T-cell (primary cell): ENCODE measurements at regions of chr11 and their contacts with region 1.

Region 1: DNA sequence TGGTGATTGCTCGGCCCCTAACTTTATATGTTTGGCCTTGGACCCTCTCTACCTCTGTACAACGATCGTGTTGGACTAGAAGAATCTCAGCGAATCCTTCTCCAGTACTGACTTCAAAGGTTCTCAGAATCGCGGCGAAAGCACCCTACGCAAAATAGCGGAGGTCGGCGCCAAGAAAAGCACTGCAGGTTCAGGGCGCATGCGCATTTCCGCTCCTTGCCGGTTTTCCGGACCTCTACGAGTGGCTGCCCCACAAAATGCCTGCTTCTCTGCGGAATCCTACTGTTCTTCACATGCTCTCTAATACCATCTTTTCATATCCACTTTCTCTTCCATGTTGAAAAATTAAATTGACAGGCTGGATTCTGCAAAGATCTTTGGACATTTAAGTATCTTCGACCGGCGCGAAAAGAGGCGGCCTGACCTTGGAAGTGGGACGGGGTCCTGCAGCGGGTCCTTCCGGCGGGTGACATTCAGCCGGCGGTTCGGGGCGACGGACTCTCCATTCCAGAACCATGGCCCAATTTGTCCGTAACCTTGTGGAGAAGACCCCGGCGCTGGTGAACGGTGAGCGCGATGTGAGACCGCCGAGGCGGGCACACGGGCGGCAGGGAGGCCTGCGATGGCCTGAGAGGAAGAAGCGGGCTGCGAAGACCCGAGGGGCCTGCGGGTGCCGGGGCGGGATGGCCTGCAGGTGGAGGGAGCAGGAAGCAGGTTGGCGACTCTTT is at the start of gene ATP5MG:
- DNase-seq: peak; percentile 83 to 96 (median 91)
- ATAC-seq: peak; percentile 61 to 83 (median 81)
- H3K4me3 ChIP-seq: peak within 1 kb of the TSS; percentile 94 to 97
- H3K4me3 Mint-ChIP-seq: peak within 1 kb of the TSS; percentile 96 to 97 (median 97)
- H3K27ac ChIP-seq: peak within 1 kb of the TSS; percentile 96
- H3K27ac Mint-ChIP-seq: peak within 1 kb of the TSS; percentile 100
- H3K4me1 ChIP-seq: peaks cover 32 to 33% of the 10 kb centered on the region in 2 experiments
- H3K4me1 Mint-ChIP-seq: peaks cover 58 to 80% (median 74%) of the 10 kb centered on the region in 3 donors
- H3K27me3 ChIP-seq: no peaks in the 10 kb centered on the region
- H3K27me3 Mint-ChIP-seq: no peaks in the 10 kb centered on the region
- total RNA-seq, gene ATP5MG: 140 to 188 (median 172) TPM

Region 2: GRCh38 chr11:117002639-117003299 is 1398.5 kb before region 1 on chr11:
- CTCF ChIA-PET with region 1: no interaction called
- POLR2A ChIA-PET with region 1: interaction called in 1 of 2 experiments, 13 read pairs
- DNase-seq: peak in 2 of 35 experiments; percentile 14 to 28
- ATAC-seq: peak; percentile 37 to 70 (median 53)
- H3K4me3 ChIP-seq: no peak overlapping the region
- H3K4me3 Mint-ChIP-seq: no peak overlapping the region
- H3K27ac ChIP-seq: no peak overlapping the region
- H3K27ac Mint-ChIP-seq: peak overlapping the region; percentile 45 to 60
- H3K4me1 ChIP-seq: peaks cover 6 to 9% of the 10 kb centered on the region in 2 experiments
- H3K4me1 Mint-ChIP-seq: peaks cover 72 to 79% (median 75%) of the 10 kb centered on the region in 3 donors
- H3K27me3 ChIP-seq: no peaks in the 10 kb centered on the region
- H3K27me3 Mint-ChIP-seq: no peaks in the 10 kb centered on the region

Region 3: DNA sequence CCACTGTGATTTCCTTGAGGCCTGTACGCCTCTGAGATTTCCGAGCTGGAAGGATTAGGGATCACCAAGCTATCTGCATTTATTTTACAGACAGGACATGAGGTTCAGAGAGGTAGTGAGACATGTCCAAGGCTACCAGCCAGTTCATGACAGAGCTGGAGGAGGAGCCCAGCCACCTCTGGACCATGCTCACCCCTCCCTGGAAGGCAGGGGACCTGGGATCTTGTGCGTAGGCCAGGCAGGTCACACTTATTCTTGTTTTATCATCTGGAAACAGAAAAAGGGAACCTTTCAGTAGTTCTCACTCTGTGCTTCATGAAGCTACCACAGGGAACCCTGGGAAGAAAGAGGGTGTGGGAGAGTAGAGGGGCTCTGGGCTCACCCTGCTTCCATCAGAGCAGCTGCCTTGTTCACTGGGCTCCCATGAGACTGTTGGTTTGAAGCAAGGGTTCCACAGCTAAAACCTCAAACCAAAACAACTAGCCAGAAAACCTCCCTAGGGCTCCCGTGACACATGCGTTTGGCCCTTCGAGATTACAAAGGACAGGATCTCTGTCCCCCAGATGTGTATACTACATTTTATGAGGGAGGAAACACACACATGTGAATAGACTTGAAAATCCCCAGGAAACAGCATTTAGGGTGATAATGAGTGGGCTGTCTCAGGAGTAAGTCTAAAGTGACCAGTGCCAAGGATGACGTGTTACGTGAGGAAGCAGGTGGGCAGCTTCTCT is 710.7 kb before region 1 on chr11:
- CTCF ChIA-PET with region 1: no interaction called
- POLR2A ChIA-PET with region 1: no interaction called
- DNase-seq: no peak
- ATAC-seq: no peak
- H3K4me3 ChIP-seq: no peak overlapping the region
- H3K4me3 Mint-ChIP-seq: no peak overlapping the region
- H3K27ac ChIP-seq: no peak overlapping the region
- H3K27ac Mint-ChIP-seq: no peak overlapping the region
- H3K4me1 ChIP-seq: no peaks in the 10 kb centered on the region
- H3K4me1 Mint-ChIP-seq: no peaks in the 10 kb centered on the region
- H3K27me3 ChIP-seq: peaks cover 0 to 9% of the 10 kb centered on the region in 2 experiments
- H3K27me3 Mint-ChIP-seq: peaks cover 9 to 10% of the 10 kb centered on the region in 2 donors

Region 4: DNA sequence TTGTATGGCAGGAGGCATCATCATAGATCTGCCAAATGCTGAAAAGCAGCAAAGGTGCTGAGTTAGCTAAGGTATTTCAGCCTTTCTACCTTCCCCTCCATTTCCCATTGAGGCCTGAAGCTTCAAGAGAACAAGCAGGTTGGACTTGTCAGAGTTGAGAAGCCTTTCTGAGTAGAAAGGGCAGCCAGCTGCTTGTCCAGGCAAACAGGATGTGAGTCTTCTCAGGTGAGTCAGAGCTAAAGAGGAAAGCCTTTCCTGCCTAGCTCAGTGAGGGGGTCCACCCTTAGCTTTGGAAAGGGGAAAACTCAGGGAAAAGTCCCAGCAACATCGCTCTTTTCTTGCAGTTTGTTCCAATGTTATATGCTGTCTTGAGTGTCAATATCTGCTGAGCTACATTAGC is 124.0 kb before region 1 on chr11:
- CTCF ChIA-PET with region 1: no interaction called
- POLR2A ChIA-PET with region 1: no interaction called
- DNase-seq: no peak
- ATAC-seq: peak in 3 of 4 experiments; percentile 64 to 83 (median 70)
- H3K4me3 ChIP-seq: no peak overlapping the region
- H3K4me3 Mint-ChIP-seq: no peak overlapping the region
- H3K27ac ChIP-seq: no peak overlapping the region
- H3K27ac Mint-ChIP-seq: peak overlapping the region; percentile 51 to 54
- H3K4me1 ChIP-seq: no peaks in the 10 kb centered on the region
- H3K4me1 Mint-ChIP-seq: peaks cover 33 to 41% (median 39%) of the 10 kb centered on the region in 3 donors
- H3K27me3 ChIP-seq: no peaks in the 10 kb centered on the region
- H3K27me3 Mint-ChIP-seq: no peaks in the 10 kb centered on the region

Region 5: DNA sequence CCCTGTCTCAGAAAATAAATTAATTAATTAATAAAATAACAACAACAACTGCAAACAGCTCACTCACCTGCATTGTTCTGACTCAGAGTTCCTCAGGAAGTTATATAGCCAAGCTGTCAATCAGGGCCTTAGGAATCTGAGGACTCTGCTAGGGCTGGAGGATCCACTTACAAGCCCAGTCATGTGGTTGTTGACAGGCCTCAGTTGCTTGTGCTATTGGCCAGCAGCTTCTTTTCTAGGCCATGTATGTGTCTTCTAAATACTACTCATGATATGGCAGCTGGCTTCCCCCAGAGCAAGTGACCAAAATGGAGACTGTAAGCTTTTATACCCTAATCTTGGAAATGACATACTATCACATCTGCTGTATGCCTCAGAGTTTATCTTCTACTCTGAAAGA is 20.7 kb before region 1 on chr11:
- CTCF ChIA-PET with region 1: interaction called in 1 of 2 experiments, 3 read pairs
- POLR2A ChIA-PET with region 1: interaction called in 1 of 2 experiments, 17 read pairs
- DNase-seq: no peak
- ATAC-seq: no peak
- H3K4me3 ChIP-seq: no peak overlapping the region
- H3K4me3 Mint-ChIP-seq: no peak overlapping the region
- H3K27ac ChIP-seq: no peak overlapping the region
- H3K27ac Mint-ChIP-seq: peak overlapping the region in 1 of 2 donors; percentile 28
- H3K4me1 ChIP-seq: no peaks in the 10 kb centered on the region
- H3K4me1 Mint-ChIP-seq: no peaks in the 10 kb centered on the region
- H3K27me3 ChIP-seq: no peaks in the 10 kb centered on the region
- H3K27me3 Mint-ChIP-seq: no peaks in the 10 kb centered on the region

Region 6: DNA sequence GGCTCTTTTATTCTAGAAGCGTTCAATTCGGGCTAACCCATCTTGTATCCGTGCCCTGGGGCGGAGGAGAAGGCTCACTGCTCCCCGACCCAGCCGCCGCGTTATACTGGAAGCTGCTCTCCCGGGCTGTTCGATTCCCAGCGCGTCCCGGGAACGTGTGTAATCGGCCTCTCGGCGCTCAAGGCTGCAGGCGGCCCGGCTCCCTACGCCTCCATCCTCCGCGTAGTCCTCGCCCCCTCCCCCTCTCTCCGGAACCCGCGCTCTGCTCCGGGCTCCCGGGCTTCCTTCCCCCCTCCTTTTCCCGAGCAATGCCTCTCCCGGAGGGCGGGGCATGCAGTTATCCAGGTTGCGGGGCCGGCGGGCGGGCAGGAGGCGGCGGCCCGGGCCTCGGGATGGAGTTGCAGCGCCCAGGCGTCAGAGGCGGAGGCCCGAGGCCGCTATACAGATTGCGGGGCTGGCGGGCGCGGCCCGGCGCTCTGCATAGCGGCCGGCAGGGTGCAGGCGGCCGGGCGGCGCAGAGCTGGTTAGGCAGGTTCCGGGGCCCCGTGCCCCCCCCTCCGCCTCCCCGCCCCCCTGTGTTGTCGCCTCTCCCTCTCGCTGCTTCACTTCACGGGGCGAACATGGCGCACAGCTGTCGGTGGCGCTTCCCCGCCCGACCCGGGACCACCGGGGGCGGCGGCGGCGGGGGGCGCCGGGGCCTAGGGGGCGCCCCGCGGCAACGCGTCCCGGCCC is 34.7 kb after region 1 on chr11 and contains the start of gene KMT2A:
- CTCF ChIA-PET with region 1: interaction called in 1 of 2 experiments, 7 read pairs
- POLR2A ChIA-PET with region 1: interaction called, 5 to 11 read pairs
- DNase-seq: peak; percentile 78 to 97 (median 89)
- ATAC-seq: peak; percentile 59 to 79 (median 62)
- H3K4me3 ChIP-seq: peak within 1 kb of the TSS; percentile 87 to 96
- H3K4me3 Mint-ChIP-seq: peak within 1 kb of the TSS; percentile 91 to 95 (median 92)
- H3K27ac ChIP-seq: peak within 1 kb of the TSS; percentile 92
- H3K27ac Mint-ChIP-seq: peak within 1 kb of the TSS; percentile 94 to 96
- H3K4me1 ChIP-seq: peaks cover 29 to 35% of the 10 kb centered on the region in 2 experiments
- H3K4me1 Mint-ChIP-seq: peaks cover 35 to 46% (median 36%) of the 10 kb centered on the region in 3 donors
- H3K27me3 ChIP-seq: no peaks in the 10 kb centered on the region
- H3K27me3 Mint-ChIP-seq: no peaks in the 10 kb centered on the region
- total RNA-seq, gene KMT2A: 130 to 183 (median 153) TPM

Region 7: GRCh38 chr11:118939953-118940598 is 538.8 kb after region 1 on chr11:
- CTCF ChIA-PET with region 1: no interaction called
- POLR2A ChIA-PET with region 1: interaction called in 1 of 2 experiments, 12 read pairs
- DNase-seq: peak in 29 of 35 experiments; percentile 31 to 71 (median 52)
- ATAC-seq: peak; percentile 92 to 96 (median 93)
- H3K4me3 ChIP-seq: no peak overlapping the region
- H3K4me3 Mint-ChIP-seq: peak overlapping the region in 1 of 3 donors; percentile 65
- H3K27ac ChIP-seq: no peak overlapping the region
- H3K27ac Mint-ChIP-seq: peak overlapping the region in 1 of 2 donors; percentile 74
- H3K4me1 ChIP-seq: peaks cover 16 to 31% of the 10 kb centered on the region in 2 experiments
- H3K4me1 Mint-ChIP-seq: peaks cover 36 to 51% (median 47%) of the 10 kb centered on the region in 3 donors
- H3K27me3 ChIP-seq: peaks cover 0 to 2% of the 10 kb centered on the region in 2 experiments
- H3K27me3 Mint-ChIP-seq: no peaks in the 10 kb centered on the region